Activated T-helper 2 cell treated with anti-CD3 and anti-CD28 coated beads, Interferon-gamma antibody, Interleukin-2, Interleukin-4, amounts not matched to agents 10 μg/mL and 5 μg/mL and 100 μg/mL, durations not matched to agents 14 hours and 24 hours and 36 hours (primary cell): ENCODE measurements at regions of chr12 and their contacts with region 1.

Region 1: GRCh38 chr12:80186727-80187217 is 87.4 kb downstream of the OTOGL start:
- DNase-seq: no peak
- H3K4me3 Mint-ChIP-seq: no peak overlapping the region
- H3K27ac Mint-ChIP-seq: no peak overlapping the region
- H3K4me1 Mint-ChIP-seq: peaks cover 4% of the 10 kb centered on the region
- H3K27me3 Mint-ChIP-seq: peaks cover 2% of the 10 kb centered on the region

Region 2: GRCh38 chr12:79547735-79548609 is 638.8 kb before region 1 on chr12:
- intact Hi-C with region 1: loop called (anchors 5 kb)
- DNase-seq: no peak
- H3K4me3 Mint-ChIP-seq: no peak overlapping the region
- H3K27ac Mint-ChIP-seq: no peak overlapping the region
- H3K4me1 Mint-ChIP-seq: no peaks in the 10 kb centered on the region
- H3K27me3 Mint-ChIP-seq: no peaks in the 10 kb centered on the region

Region 3: DNA sequence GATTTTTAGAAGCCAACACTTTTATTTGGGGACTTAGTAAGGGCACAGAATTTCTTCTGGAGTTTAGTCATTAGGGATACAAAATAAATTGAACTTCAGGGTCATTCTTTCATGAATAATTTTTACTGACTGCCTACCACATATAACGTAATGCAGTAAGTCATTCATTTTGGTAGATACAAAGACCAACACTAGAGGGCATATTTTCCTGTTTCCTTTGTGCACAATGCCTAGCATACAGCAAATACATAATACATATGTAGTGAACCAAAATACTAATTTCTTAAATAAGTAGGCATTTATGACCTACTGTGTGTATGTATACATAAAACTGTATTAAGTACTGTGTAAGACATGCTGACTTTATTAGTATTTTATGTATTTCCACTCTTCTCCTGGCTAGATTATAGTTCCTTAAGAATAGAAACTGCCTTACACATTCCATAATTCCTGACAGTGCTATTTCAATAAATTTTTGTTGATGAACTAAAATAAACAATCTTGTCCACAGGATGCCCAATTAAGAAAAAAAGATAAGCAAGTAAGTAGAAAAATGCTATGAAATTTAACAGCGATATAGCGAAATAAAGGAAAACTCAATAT is 299.8 kb before region 1 on chr12:
- intact Hi-C with region 1: loop called (anchors 1 kb)
- DNase-seq: no peak
- H3K4me3 Mint-ChIP-seq: no peak overlapping the region
- H3K27ac Mint-ChIP-seq: no peak overlapping the region
- H3K4me1 Mint-ChIP-seq: peaks cover 32% of the 10 kb centered on the region
- H3K27me3 Mint-ChIP-seq: no peaks in the 10 kb centered on the region

Region 4: DNA sequence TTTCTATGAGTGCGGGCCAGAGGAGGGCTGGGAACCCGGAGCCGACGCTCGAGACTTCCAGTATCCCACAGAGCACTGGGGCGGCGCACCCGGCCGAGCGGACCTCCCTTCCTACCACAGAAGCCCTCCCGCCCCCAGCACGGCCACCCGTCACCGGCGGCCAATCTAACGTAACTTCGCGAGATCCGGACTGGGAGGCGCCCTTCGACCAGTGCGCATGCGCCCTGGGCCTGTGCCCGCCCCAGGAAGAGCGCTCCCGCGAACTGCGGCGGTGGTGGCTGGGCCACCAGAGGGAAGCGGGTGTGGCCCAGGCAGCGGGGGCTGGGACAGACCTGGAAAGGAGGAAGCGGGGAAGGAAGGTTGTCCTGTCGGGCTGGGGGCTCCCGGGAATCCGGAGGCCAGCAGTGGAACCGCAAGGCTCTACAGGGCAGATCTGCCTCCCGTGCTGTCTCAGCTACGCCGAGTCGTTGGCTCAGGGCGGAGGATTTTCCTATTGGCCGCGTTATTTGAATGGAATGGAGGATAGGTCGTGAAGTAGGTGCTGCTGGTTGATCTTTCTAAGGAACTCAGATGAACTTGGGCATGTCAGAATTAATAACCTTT is 251.7 kb before region 1 on chr12 and contains the start of gene PPP1R12A:
- intact Hi-C with region 1: loop called (anchors 2 kb)
- DNase-seq: peak; percentile 94
- H3K4me3 Mint-ChIP-seq: peak within 1 kb of the TSS; percentile 92
- H3K27ac Mint-ChIP-seq: peak within 1 kb of the TSS; percentile 91
- H3K4me1 Mint-ChIP-seq: peaks cover 29% of the 10 kb centered on the region
- H3K27me3 Mint-ChIP-seq: no peaks in the 10 kb centered on the region
- total RNA-seq, gene PPP1R12A: 82.4 and 89.8 TPM in 2 replicates

Region 5: DNA sequence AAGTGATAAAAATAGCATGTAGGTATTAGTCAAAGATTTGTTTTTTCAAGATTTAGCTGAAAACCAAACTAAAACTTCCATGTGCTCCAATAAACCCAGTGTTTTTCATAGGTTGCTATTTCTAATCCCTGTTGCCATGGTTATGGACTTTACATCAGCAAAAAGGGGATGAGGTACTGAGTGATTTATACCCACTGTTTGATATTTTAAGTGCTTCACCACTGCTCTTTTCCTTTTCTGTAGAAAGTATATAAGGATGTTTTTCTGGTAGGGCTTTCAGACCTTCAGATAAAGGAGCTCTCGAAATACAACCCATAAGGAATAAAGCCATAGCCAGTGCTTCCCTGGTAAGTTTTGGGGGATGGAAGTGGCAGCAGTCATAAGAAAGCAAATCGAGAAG is 87.5 kb before region 1 on chr12 and contains the start of gene OTOGL:
- intact Hi-C with region 1: loop called (anchors 5 kb)
- DNase-seq: no peak
- H3K4me3 Mint-ChIP-seq: no peak within 1 kb of the TSS
- H3K27ac Mint-ChIP-seq: no peak within 1 kb of the TSS
- H3K4me1 Mint-ChIP-seq: no peaks in the 10 kb centered on the region
- H3K27me3 Mint-ChIP-seq: no peaks in the 10 kb centered on the region
- total RNA-seq, gene OTOGL: 0.16 TPM in 1 of 2 replicates, not detected in the other

Region 6: DNA sequence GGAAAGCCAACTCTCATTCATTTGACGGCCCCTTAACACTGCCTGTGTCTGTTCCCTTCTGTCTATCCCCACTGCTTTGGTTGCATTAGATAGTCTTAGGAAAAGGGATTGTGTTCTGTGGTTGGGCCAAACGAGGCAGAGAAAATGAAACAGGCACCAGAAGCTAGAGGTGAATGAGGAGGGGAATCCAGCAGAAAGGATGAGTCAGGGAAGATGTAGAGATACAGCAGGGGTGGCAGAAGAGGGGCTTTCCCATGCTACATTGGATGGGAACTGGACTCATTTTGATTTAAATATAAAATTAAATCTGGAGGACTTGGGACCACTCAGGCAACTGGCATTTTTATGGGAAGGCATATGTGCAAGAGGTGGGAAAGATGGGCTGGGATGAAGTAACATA is 44.1 kb before region 1 on chr12:
- intact Hi-C with region 1: no loop called
- DNase-seq: no peak
- H3K4me3 Mint-ChIP-seq: no peak overlapping the region
- H3K27ac Mint-ChIP-seq: no peak overlapping the region
- H3K4me1 Mint-ChIP-seq: peaks cover 6% of the 10 kb centered on the region
- H3K27me3 Mint-ChIP-seq: peaks cover 12% of the 10 kb centered on the region

Region 7: DNA sequence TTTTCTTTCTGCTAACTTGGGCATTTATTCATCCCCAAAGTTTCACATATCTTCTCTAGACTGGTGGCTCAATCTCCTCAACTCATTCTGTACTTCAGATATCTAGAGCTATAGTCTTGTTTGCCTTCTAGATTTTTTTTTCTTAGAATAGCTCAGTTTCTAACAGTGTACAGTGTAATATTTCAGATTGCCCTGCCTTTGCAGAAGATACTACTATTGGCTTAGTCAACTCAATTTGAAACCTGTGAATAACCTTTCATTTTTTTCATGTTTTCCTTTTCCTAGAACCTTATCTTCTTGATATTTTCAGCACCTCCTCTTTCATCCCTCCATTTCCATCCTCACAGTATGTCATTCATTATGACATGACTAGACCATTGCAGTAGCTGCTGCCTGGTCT is 17.8 kb before region 1 on chr12:
- intact Hi-C with region 1: loop called (anchors 1 kb)
- DNase-seq: no peak
- H3K4me3 Mint-ChIP-seq: no peak overlapping the region
- H3K27ac Mint-ChIP-seq: peak overlapping the region; percentile 61
- H3K4me1 Mint-ChIP-seq: peaks cover 46% of the 10 kb centered on the region
- H3K27me3 Mint-ChIP-seq: peaks cover 6% of the 10 kb centered on the region